HEK293 (cell line): ENCODE measurements at regions of chr17 and their contacts with region 1.

Region 1: GRCh38 chr17:81142301-81143199 is 22.8 kb upstream of the PVALEF start:
- H3K4me3 ChIP-seq: no peak overlapping the region
- H3K27ac ChIP-seq: no peak overlapping the region
- H3K4me1 ChIP-seq: no peaks in the 10 kb centered on the region
- CTCF ChIP-seq: peak; percentile 86

Region 2: GRCh38 chr17:80718428-80718827 is 424.1 kb before region 1 on chr17:
- CTCF ChIA-PET with region 1: no interaction called
- POLR2A ChIA-PET with region 1: no interaction called
- H3K4me3 ChIP-seq: no peak overlapping the region
- H3K27ac ChIP-seq: no peak overlapping the region
- H3K4me1 ChIP-seq: no peaks in the 10 kb centered on the region
- CTCF ChIP-seq: no peak

Region 3: DNA sequence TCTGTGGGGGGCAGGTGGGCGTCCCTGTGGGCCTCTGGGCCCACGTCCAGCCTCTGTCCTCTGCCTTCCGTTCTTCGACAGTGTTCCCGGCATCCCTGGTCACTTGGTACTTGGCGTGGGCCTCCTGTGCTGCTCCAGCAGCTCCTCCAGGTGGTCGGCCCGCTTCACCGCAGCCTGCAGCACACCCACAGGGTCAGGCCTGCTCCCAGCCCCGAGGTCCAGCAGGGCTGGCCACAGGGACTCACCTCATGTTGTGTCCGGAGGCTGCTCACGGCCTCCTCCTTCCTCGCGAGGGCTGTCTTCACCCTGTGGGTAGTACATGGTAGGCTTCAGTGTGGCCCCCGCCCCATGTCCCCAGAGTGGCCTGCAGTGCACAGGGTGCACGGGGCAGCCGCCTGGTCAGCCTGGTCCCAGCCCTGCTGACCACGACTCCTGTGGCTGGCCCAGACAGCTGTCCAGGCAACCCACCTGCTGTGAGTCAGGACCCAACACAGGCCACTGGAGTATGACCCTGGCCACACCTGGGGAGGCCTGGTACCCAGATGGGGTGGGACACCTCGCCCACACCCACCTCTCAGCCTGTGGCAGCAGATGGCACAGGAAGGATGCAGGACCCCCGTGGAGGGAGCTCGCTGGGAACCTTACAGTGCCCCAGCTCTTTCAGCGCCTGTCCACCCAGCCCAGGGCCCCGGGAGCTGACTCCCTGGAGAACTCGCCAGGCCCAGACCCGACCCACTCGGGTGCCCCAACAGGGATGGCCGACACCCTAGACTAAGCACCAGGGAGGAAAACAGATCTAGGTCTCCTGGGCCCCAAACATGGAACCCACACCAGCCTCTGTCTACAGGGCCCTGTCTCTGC is 47.4 kb after region 1 on chr17:
- CTCF ChIA-PET with region 1: interaction called, 10 read pairs
- POLR2A ChIA-PET with region 1: interaction called, 3 read pairs
- H3K4me3 ChIP-seq: no peak overlapping the region
- H3K27ac ChIP-seq: no peak overlapping the region
- H3K4me1 ChIP-seq: no peaks in the 10 kb centered on the region
- CTCF ChIP-seq: peak; percentile 71

Region 4: GRCh38 chr17:81200695-81201580 is 58.4 kb after region 1 on chr17:
- CTCF ChIA-PET with region 1: interaction called, 10 read pairs
- POLR2A ChIA-PET with region 1: interaction called, 3 read pairs
- H3K4me3 ChIP-seq: no peak overlapping the region
- H3K27ac ChIP-seq: 0 out of 2 replicates have a peak overlapping the region, but pooled peaks have one; percentile 14
- H3K4me1 ChIP-seq: no peaks in the 10 kb centered on the region
- CTCF ChIP-seq: no peak; the same call in 1 of the 2 replicates

Region 5: GRCh38 chr17:81230043-81230820 is 87.7 kb after region 1 on chr17:
- CTCF ChIA-PET with region 1: interaction called, 23 read pairs
- POLR2A ChIA-PET with region 1: no interaction called
- H3K4me3 ChIP-seq: no peak overlapping the region
- H3K27ac ChIP-seq: no peak overlapping the region
- H3K4me1 ChIP-seq: peaks cover 5% of the 10 kb centered on the region
- CTCF ChIP-seq: peak; percentile 45; the same call in 1 of the 2 replicates

Region 6: DNA sequence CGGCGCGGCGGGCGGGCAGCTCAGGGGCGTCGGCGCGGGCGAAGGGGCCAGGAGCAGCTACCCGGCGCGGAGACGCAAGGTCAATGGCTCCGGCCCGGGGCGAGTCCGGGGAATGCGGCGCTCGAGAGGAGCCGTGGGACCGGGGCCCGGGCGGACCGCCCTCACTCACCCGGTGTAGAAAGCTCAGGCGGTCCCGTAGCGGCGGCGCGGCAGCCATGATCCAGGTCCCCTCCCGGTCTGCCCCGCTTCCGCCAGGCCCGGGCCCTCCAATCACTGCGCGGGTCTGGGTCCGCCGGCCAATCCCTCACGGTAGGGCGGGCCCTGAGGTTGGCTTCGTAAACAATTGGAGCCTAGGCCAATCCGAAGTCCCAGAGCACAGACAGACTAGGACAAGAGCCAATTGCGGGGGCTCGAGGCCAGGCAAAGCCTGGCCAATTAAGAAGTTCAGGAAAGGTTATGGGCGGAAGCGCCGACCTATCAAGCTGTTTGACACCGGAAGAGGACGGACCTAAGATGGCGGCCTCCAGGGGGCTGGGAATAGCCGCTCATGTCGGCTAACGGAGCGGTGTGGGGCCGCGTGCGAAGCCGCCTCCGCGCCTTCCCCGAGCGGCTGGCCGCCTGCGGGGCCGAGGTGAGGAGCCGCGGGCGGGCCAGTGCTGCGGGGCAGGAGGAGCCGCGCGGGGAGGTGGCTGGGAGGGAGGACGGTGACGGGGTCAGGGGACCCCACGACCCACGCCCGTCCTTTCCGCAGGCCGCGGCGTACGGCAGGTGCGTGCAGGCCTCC is 96.5 kb after region 1 on chr17 and contains the starts of genes NDUFAF8 and TEPSIN:
- CTCF ChIA-PET with region 1: interaction called, 42 read pairs
- POLR2A ChIA-PET with region 1: interaction called, 9 read pairs
- H3K4me3 ChIP-seq: peak within 1 kb of the TSS; percentile 86
- H3K27ac ChIP-seq: peak within 1 kb of the TSS; percentile 92
- H3K4me1 ChIP-seq: peaks cover 8% of the 10 kb centered on the region
- CTCF ChIP-seq: no peak